ENCODE measurements at regions of chr11 and their contacts with region 1.

Region 1: GRCh38 chr11:47355283-47356128 is 3.0 kb upstream of the MYBPC3 start:
- DNase-seq: peak; percentile 93 to 97
- ATAC-seq: peak; percentile 94 to 97
- H3K4me3 ChIP-seq: peak overlapping the region; percentile 53 to 70 (median 60)
- H3K27ac ChIP-seq: peak overlapping the region; percentile 80 to 92 (median 85)
- H3K4me1 ChIP-seq: peaks cover 10 to 11% of the 10 kb centered on the region in 2 donors
- H3K27me3 ChIP-seq: no peaks in the 10 kb centered on the region
- CTCF ChIP-seq: peak; percentile 92 to 98 (median 96)
- POLR2A ChIP-seq: no peak

Region 2: DNA sequence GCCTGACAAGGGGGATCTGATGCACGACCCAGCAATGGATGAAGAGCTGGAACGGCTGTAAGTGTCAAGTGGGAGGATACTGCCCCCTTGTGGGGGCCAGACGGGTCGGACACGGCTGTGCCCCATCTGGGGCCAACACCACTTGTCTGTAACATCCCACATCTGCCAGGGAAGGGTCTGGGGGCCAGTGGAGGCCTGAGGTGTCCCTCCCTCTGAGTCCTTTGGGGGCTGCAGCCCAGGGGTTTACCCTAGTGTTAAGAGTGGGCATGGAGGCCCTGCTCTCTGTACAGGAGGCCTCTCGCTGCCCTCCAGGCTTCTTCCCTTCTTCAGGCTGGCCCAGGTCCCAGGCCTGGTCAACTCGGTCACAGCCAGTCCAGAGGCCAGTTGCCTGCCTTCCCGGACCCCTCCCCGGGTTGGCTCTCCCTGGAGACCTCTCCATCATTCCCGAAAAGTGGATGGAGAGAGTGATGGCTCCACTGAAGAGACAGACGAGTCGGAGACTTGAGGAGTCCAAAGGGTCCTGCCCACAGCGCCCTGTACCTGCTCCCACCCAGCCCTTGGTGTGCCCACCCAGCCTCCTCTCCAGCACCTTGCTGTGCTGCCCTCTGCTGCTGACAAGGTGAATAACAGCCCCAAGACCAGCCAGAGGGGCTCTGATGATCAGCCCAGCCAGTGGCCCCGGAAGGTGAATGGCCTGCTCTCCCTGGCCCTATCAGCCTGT is 194.2 kb before region 1 on chr11:
- in situ Hi-C with region 1: no loop called
- intact Hi-C with region 1: loop called (anchors 5 kb)
- DNase-seq: peak in 1 of 2 donors; percentile 62
- ATAC-seq: peak; percentile 45 to 65
- H3K4me3 ChIP-seq: no peak overlapping the region
- H3K27ac ChIP-seq: peak overlapping the region in 2 of 4 donors; percentile 1 to 32
- H3K4me1 ChIP-seq: peaks cover 4 to 13% of the 10 kb centered on the region in 2 donors
- H3K27me3 ChIP-seq: no peaks in the 10 kb centered on the region
- CTCF ChIP-seq: peak; percentile 48 to 61 (median 55)
- POLR2A ChIP-seq: no peak

Region 3: DNA sequence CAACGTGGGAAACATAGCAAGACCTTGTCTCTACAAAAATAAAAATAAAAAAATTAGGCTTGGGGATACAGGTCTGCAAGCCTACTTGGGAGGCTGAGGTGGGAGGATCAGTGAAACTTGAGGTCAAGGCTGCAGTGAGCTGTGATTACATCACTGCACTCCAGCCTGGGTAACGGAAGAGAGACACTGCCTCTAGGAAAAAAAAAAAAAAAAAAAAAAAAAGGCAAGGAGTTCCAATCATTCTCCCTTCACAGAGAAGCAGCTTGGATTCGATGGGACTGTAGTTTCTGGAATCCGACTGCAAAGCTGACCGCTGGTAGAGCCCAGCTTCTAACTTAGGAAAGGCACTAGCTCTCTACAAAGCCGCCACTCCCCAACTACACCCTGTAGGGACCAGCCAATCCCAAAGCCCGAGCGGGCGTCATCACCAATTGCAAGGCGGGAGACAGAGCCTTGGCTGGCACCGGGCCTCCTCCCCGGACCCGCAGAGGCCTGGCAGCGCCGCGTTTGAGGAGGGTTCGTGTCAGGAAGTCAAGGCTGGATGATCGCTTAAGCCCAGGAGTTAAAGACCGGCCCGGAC is 141.4 kb before region 1 on chr11:
- in situ Hi-C with region 1: no loop called
- intact Hi-C with region 1: loop called (anchors 1 kb)
- DNase-seq: peak; percentile 92 to 94
- ATAC-seq: peak; percentile 95 to 96
- H3K4me3 ChIP-seq: peak overlapping the region; percentile 69 to 89 (median 70)
- H3K27ac ChIP-seq: peak overlapping the region; percentile 95 to 98 (median 97)
- H3K4me1 ChIP-seq: peaks cover 14 to 23% of the 10 kb centered on the region in 2 donors
- H3K27me3 ChIP-seq: no peaks in the 10 kb centered on the region
- CTCF ChIP-seq: no peak
- POLR2A ChIP-seq: peak; percentile 64 to 74

Region 4: GRCh38 chr11:47269002-47269828 is 86.3 kb before region 1 on chr11:
- in situ Hi-C with region 1: no loop called
- intact Hi-C with region 1: loop called (anchors 2 kb)
- DNase-seq: peak; percentile 88 to 93
- ATAC-seq: peak; percentile 77 to 81
- H3K4me3 ChIP-seq: peak overlapping the region; percentile 55 to 87 (median 86)
- H3K27ac ChIP-seq: peak overlapping the region; percentile 98 to 99 (median 98)
- H3K4me1 ChIP-seq: peaks cover 37 to 40% of the 10 kb centered on the region in 2 donors
- H3K27me3 ChIP-seq: no peaks in the 10 kb centered on the region
- CTCF ChIP-seq: no peak
- POLR2A ChIP-seq: no peak

Region 5: GRCh38 chr11:47324520-47324919 is 31.0 kb before region 1 on chr11:
- in situ Hi-C with region 1: no loop called
- intact Hi-C with region 1: no loop called
- DNase-seq: no peak
- ATAC-seq: no peak
- H3K4me3 ChIP-seq: no peak overlapping the region
- H3K27ac ChIP-seq: no peak overlapping the region
- H3K4me1 ChIP-seq: peaks cover 10 to 14% of the 10 kb centered on the region in 2 donors
- H3K27me3 ChIP-seq: no peaks in the 10 kb centered on the region
- CTCF ChIP-seq: no peak
- POLR2A ChIP-seq: no peak

Region 6: GRCh38 chr11:47499614-47500013 is 144.1 kb after region 1 on chr11:
- in situ Hi-C with region 1: no loop called
- intact Hi-C with region 1: no loop called
- DNase-seq: no peak
- ATAC-seq: no peak
- H3K4me3 ChIP-seq: no peak overlapping the region
- H3K27ac ChIP-seq: peak overlapping the region; percentile 75 to 83 (median 80)
- H3K4me1 ChIP-seq: peaks cover 80 to 83% of the 10 kb centered on the region in 2 donors
- H3K27me3 ChIP-seq: no peaks in the 10 kb centered on the region
- CTCF ChIP-seq: no peak
- POLR2A ChIP-seq: no peak

Region 7: DNA sequence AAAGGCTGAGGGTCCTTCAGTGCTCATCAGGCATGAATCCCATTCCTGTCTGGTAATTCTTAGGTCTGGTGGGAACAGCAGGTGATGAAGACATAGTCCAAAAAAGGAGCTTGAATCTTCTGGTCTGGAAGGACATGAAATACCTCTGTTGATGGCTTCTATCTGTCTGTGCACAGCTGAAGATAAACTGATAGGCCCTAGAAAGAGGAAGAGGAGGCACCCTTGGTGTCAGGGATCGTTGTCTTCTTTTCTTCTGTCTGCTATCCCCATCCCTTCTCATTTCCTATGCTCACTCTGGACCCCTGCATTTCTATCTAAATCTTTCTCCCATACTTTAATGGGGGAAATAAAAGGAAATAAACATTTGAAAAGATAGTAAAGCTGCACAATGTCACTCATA is 350.2 kb after region 1 on chr11:
- in situ Hi-C with region 1: no loop called
- intact Hi-C with region 1: no loop called
- DNase-seq: no peak
- ATAC-seq: no peak
- H3K4me3 ChIP-seq: no peak overlapping the region
- H3K27ac ChIP-seq: no peak overlapping the region
- H3K4me1 ChIP-seq: no peaks in the 10 kb centered on the region
- H3K27me3 ChIP-seq: no peaks in the 10 kb centered on the region
- CTCF ChIP-seq: no peak
- POLR2A ChIP-seq: no peak